ENCODE measurements at regions of chr1 and their contacts with region 1.

Region 1: GRCh38 chr1:204819495-204819894 is 51.2 kb upstream of the NFASC start:
- DNase-seq: no peak
- ATAC-seq: no peak
- H3K4me3 ChIP-seq: no peak overlapping the region
- H3K27ac ChIP-seq: no peak overlapping the region
- H3K4me1 ChIP-seq: no peaks in the 10 kb centered on the region
- H3K27me3 ChIP-seq: peaks cover 17% of the 10 kb centered on the region
- CTCF ChIP-seq: no peak

Region 2: GRCh38 chr1:204685236-204686006 is 134.1 kb before region 1 on chr1 and contains the start of gene LRRN2:
- CTCF ChIA-PET with region 1: no interaction called
- POLR2A ChIA-PET with region 1: no interaction called
- in situ Hi-C with region 1: no loop called
- intact Hi-C with region 1: no loop called
- DNase-seq: no peak
- ATAC-seq: peak; percentile 68
- H3K4me3 ChIP-seq: peak within 1 kb of the TSS; percentile 36 to 41
- H3K27ac ChIP-seq: no peak within 1 kb of the TSS; the same call in 1 of the 2 replicates
- H3K4me1 ChIP-seq: no peaks in the 10 kb centered on the region; the same call in none of the 2 replicates
- H3K27me3 ChIP-seq: peaks cover 9% of the 10 kb centered on the region; the same call in 1 of the 2 replicates
- CTCF ChIP-seq: no peak
- total RNA-seq, gene LRRN2: 2.0 TPM

Region 3: DNA sequence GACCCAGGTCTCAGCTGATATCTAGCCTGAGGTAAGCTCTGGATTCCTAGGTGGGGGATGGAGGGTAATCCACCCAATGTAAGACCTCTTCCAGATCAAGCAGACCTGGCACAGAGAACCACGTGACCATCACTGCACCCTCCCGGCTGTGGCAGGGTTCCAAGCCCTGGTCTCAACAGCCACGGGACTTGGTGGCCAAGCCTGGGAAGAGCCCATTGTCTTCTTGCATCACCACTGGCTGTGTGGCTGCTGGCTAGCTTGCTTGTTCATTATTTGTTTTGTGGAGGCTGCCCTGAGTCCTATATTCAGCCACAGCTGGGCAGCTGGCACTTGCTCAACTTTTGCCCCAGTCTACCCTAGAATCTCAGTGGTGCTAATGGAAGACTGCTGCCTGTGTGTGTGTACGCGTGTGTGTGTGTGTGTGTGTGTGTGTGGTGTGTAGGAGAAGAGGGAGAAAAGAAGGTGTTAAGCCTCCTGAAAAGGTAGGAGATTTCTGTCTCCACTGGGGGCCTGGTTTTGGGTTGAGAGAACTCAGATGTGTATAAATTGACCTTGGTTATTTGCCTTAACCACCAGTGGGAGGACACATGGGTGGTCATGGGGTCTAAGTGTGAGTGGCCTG is 27.2 kb after region 1 on chr1:
- CTCF ChIA-PET with region 1: no interaction called
- POLR2A ChIA-PET with region 1: no interaction called
- in situ Hi-C with region 1: no loop called
- intact Hi-C with region 1: no loop called
- DNase-seq: no peak
- ATAC-seq: no peak
- H3K4me3 ChIP-seq: no peak overlapping the region
- H3K27ac ChIP-seq: no peak overlapping the region
- H3K4me1 ChIP-seq: no peaks in the 10 kb centered on the region
- H3K27me3 ChIP-seq: no peaks in the 10 kb centered on the region
- CTCF ChIP-seq: no peak

Region 4: GRCh38 chr1:205137901-205138300 is 318.4 kb after region 1 on chr1:
- CTCF ChIA-PET with region 1: no interaction called
- POLR2A ChIA-PET with region 1: no interaction called
- in situ Hi-C with region 1: no loop called
- intact Hi-C with region 1: no loop called
- DNase-seq: no peak
- ATAC-seq: no peak
- H3K4me3 ChIP-seq: no peak overlapping the region
- H3K27ac ChIP-seq: no peak overlapping the region
- H3K4me1 ChIP-seq: no peaks in the 10 kb centered on the region
- H3K27me3 ChIP-seq: no peaks in the 10 kb centered on the region
- CTCF ChIP-seq: no peak

Region 5: DNA sequence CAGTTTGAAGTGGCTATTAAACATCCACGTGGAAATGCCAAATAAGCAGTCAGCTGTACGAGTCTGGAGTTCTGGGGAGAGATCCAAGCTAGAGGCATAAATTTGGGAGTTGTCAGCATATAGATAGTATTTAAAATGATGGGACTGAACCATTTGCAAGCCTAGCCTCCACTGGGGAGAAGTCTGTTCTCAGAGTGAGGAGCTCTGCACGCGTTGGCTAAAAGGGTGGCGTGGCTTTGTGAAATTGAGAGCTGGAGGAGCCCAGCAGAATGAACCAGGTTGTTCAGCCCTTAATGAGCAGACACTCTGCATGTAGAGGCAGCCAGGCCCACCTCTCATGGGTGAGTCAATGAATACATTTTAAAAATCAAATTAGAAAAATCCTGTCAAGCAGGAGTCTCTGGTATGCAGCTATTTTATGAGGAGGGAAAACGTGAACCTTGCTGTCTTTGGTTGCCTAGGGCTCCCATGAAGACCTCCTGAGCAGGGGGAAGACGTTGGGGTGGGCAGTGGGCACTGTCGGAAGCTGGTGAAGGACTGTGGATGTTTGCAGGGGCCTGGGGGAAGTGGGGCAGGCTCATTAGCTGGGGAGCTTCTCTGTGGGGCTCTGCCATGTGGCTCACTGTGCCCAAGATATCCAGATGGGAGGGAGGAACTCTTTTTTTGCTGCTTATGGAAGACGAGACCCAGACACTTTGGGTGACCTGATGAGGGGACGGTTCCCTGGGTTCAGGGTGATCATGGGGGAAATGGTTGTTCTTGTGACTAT is 427.0 kb after region 1 on chr1:
- CTCF ChIA-PET with region 1: interaction called, 14 read pairs
- POLR2A ChIA-PET with region 1: no interaction called
- in situ Hi-C with region 1: no loop called
- intact Hi-C with region 1: no loop called
- DNase-seq: no peak
- ATAC-seq: no peak
- H3K4me3 ChIP-seq: no peak overlapping the region
- H3K27ac ChIP-seq: no peak overlapping the region
- H3K4me1 ChIP-seq: no peaks in the 10 kb centered on the region
- H3K27me3 ChIP-seq: no peaks in the 10 kb centered on the region
- CTCF ChIP-seq: no peak

Region 6: GRCh38 chr1:205849619-205850355 is 1030.3 kb after region 1 on chr1 and contains the start of gene PM20D1:
- CTCF ChIA-PET with region 1: no interaction called
- POLR2A ChIA-PET with region 1: no interaction called
- in situ Hi-C with region 1: no loop called
- intact Hi-C with region 1: no loop called
- DNase-seq: peak; percentile 79
- ATAC-seq: peak; percentile 100
- H3K4me3 ChIP-seq: peak within 1 kb of the TSS; percentile 60 to 86
- H3K27ac ChIP-seq: peak within 1 kb of the TSS; percentile 57; the same call in 1 of the 2 replicates
- H3K4me1 ChIP-seq: peaks cover 3% of the 10 kb centered on the region; the same call in 1 of the 2 replicates
- H3K27me3 ChIP-seq: 0 out of 2 replicates have a peak, but pooled peaks cover 4% of the 10 kb centered on the region
- CTCF ChIP-seq: no peak
- total RNA-seq, gene PM20D1: 0.13 TPM

Measured in Panc1 (cell line).